Left colon (tissue), 2 donors: ENCODE measurements at regions of chr1 and their contacts with region 1.

Region 1: GRCh38 chr1:235317168-235317567 is 10.8 kb downstream of the ARID4B start:
- DNase-seq: no peak
- ATAC-seq: no peak

Region 2: DNA sequence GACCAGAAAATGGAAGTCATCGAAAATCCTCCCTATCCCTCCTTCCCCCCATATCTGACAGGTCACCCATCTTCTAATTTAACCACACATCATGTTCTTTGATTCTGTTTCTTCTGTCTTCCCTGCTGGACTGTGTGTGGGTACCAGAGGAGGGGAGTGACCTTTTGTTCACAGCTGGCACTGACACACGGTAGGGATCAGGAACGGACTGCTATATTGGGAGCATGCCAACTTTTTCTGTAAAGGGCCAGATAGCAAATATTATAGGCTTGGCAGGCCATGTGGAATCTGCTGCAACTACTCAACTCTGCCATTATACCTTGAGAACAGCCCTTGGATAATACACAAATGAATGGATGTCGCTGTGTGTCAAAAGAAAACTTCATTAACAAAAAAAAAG is 181.1 kb before region 1 on chr1:
- intact Hi-C with region 1: no loop called
- DNase-seq: no peak
- ATAC-seq: no peak

Region 3: DNA sequence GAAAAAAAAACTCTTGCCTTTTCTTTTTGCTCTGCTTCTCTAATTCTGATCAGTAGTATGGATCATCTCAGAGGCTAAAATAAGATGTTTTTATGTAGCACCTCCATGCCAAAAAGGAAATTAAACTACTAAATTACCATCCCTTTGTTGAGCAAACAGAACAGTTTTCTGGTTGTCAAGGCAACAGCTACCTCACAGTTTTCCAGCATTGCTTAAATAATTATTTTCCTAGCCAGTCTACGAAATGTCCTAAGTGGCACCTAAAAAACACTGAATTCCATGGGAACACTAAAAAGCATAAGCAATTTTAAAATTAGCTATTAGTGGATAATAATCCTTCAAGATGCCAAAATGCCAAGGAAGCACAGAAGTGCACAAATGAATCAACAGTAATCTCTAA is 50.8 kb before region 1 on chr1:
- intact Hi-C with region 1: loop called in 1 of 2 experiments (anchors 10 kb)
- DNase-seq: no peak
- ATAC-seq: no peak